H1 (cell line): ENCODE measurements at regions of chr2 and their contacts with region 1.

Region 1: DNA sequence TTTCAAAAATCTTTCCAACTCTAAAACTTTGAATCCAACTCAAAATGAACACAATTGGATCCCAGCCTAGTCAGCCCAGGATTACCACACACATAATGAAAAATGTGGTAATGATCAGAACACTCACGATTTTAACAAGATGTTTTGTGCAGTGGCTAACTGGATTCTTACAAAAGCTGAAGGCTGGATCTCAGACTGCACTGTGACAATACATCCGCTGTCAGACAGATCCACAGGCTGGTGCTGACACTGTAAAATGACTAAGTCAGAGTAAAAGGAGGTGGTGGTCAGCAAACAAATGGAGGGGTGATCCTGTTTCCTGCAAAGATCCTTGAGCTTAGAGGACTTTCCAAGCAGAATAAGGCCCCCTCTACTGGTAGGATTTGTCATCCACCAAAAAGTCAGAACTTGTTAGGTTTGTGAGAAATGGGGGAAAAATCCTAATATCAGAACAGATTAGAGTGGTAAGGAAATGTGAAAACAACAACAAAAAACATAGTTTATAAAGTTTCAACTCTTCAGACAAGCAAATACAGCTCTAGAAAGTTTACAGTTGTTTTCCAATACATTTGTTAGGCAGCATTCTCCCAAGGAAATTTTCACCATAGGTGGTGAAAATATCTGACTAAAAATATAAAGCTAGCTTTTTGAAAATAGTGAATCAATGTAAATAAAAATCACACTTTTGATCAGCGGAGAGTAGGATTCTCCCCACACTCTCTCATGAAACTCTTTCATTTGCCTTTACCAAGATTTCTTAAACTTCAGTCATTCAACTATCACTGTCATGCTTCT is 211.9 kb downstream of the AGPS start:
- DNase-seq: no peak
- H3K4me3 ChIP-seq: no peak overlapping the region
- H3K27ac ChIP-seq: no peak overlapping the region
- H3K4me1 ChIP-seq: peaks cover 0 to 3% (median 0%) of the 10 kb centered on the region in 4 experiments; a peak in 2 of 7 replicates
- H3K27me3 ChIP-seq: no peaks in the 10 kb centered on the region
- CTCF ChIP-seq: peak in 2 of 3 experiments; percentile 69 to 76; a peak in 3 of 4 replicates
- EP300 ChIP-seq: no peak
- POLR2A ChIP-seq: no peak
- RAD21 ChIP-seq: peak; percentile 71 to 78

Region 2: DNA sequence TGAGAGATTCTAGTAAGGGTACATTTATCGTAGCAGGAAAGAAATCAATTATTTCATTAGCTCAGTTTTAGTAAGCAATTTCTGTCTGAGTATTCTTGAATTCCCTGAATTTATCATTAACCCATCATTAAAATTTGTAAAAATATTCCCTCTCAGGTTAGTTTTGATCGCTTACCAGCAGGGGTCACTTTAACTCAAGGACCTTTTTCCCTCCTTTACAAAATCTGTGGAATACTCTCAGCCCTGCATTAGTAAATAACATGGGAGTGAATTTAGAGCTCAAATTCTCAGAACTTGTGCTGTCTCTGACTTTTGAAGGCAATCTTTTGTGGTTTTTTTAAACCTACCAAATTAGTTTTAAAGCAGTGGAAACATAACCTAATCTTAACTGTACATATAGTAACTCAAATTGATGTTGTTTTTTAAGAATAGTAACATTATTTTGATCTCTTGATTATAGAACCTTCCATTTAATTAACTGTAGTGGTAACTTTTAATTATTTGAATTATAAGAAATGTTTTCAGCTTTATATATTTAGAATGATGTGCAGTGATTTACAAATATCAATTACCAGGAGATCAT is 114.7 kb before region 1 on chr2:
- CTCF ChIA-PET with region 1: interaction called, 22 read pairs
- POLR2A ChIA-PET with region 1: no interaction called
- DNase-seq: no peak
- H3K4me3 ChIP-seq: no peak overlapping the region
- H3K27ac ChIP-seq: no peak overlapping the region
- H3K4me1 ChIP-seq: no peaks in the 10 kb centered on the region
- H3K27me3 ChIP-seq: no peaks in the 10 kb centered on the region
- CTCF ChIP-seq: peak in 2 of 3 experiments; percentile 29 to 38; a peak in 2 of 4 replicates
- EP300 ChIP-seq: no peak
- POLR2A ChIP-seq: no peak
- RAD21 ChIP-seq: peak; percentile 64 to 65

Region 3: DNA sequence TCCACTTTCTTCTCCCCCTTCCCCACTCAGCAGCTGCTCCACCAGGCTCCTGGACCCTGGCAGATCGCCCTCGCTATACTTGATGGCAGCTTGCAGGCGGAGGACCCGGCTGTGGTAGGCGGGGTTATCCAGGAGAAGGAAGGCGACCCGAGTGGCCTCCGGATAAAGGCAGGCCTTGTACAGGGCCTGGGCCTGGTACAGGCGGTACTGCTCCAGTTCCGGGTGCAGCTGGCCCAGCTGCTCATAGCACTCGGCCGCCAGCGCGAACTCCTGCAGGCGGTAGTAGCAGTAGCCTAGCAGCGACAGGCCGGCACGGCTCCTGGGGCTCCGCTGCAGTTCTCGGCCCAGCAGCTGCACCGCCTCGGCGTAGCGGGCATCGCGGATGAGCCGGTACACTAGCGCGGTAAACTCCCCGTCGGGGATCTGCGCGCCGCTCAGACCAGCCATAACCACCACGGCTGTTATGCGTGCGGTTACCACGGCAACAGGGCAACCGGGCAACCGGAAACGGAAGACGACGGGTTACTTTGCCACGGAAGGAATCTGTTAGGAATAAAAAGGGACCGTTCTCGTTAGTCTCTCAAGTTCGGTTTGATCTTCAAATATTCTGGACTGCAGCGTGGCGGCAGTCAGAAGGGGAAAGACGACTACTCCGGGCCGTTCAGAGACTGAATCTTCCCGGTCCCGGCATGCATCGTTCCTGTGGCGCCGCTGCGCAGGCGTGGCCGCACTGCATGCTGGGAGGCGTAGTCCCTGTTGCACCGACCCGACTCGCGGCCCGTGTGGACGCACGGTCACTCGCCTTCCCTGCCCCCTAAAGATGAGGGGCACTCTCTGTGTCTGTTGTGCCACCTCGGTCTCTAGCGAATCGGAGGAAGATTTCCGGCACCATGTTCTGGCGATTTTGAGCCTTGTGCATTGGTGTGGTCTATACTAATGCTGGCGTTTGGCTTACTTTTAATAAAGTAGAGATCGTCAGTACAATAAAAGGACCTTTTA is 14.1 kb after region 1 on chr2:
- CTCF ChIA-PET with region 1: interaction called, 14 read pairs
- POLR2A ChIA-PET with region 1: no interaction called
- DNase-seq: peak; percentile 50 to 92
- H3K4me3 ChIP-seq: peak overlapping the region; percentile 81 to 95 (median 92)
- H3K27ac ChIP-seq: peak overlapping the region; percentile 98
- H3K4me1 ChIP-seq: peaks cover 0 to 7% (median 2%) of the 10 kb centered on the region in 4 experiments; a peak in 3 of 7 replicates
- H3K27me3 ChIP-seq: no peaks in the 10 kb centered on the region
- CTCF ChIP-seq: no peak
- EP300 ChIP-seq: no peak
- POLR2A ChIP-seq: peak in 1 of 2 experiments; percentile 88; a peak in 2 of 3 replicates
- RAD21 ChIP-seq: no peak

Region 4: GRCh38 chr2:177852389-177852788 is 247.9 kb after region 1 on chr2:
- CTCF ChIA-PET with region 1: no interaction called
- POLR2A ChIA-PET with region 1: no interaction called
- DNase-seq: no peak
- H3K4me3 ChIP-seq: no peak overlapping the region
- H3K27ac ChIP-seq: no peak overlapping the region
- H3K4me1 ChIP-seq: no peaks in the 10 kb centered on the region
- H3K27me3 ChIP-seq: 0 out of 7 replicates have a peak, but pooled peaks cover 0 to 2% (median 0%) of the 10 kb centered on the region in 4 experiments
- CTCF ChIP-seq: no peak
- EP300 ChIP-seq: no peak
- POLR2A ChIP-seq: no peak
- RAD21 ChIP-seq: no peak